ENCODE measurements at regions of chr7 and their contacts with region 1.

Region 1: GRCh38 chr7:22759721-22760120 is 32.7 kb downstream of the IL6 start:
- DNase-seq: no peak
- ATAC-seq: no peak
- H3K4me3 ChIP-seq: no peak overlapping the region
- H3K27ac ChIP-seq: no peak overlapping the region
- H3K4me1 ChIP-seq: no peaks in the 10 kb centered on the region
- H3K27me3 ChIP-seq: no peaks in the 10 kb centered on the region
- CTCF ChIP-seq: no peak
- POLR2A ChIP-seq: no peak

Region 2: DNA sequence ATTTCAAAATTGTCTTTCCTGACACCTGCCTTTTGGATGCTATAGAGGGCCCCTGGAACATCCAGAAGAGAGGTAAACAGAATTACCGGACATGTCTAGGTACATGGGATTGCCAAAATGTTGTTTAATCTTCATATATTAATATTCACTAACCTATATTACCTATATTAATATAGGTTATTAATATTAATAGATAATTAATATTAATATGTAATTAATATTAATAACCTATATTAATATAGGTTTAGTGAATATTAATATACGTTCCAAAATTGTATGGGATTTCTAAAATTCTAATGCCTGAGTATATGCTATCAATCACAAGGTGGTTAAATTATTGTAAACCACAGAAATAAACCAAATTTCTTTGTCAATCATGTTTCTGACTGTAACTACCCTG is 45.5 kb after region 1 on chr7:
- intact Hi-C with region 1: loop called in 1 of 10 experiments (anchors 2 kb)
- DNase-seq: no peak
- ATAC-seq: no peak
- H3K4me3 ChIP-seq: no peak overlapping the region
- H3K27ac ChIP-seq: no peak overlapping the region
- H3K4me1 ChIP-seq: no peaks in the 10 kb centered on the region
- H3K27me3 ChIP-seq: no peaks in the 10 kb centered on the region
- CTCF ChIP-seq: no peak
- POLR2A ChIP-seq: no peak

Measured in heart left ventricle (tissue), 16 donors.